ENCODE measurements at regions of chr2 and their contacts with region 1.

Region 1: DNA sequence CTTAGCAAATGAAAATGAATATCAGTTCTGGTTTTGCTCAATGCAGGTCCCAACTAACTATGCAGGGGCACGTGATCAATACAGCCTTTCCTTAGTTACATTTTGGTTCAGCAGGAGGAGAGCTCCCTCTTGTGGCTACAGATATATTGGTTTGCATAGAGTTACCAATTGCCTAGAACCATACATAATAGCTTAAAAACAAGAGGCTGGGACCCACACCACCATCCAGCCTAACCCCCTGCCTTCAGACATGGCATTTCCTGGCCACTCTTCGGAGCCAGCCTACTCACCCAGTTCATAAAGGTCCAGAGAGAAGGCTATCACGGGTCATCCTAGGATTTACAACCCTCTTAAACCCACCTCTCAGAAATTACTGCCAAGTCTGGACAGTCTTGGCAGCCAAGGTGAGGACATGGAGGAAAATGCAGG is 10.5 kb downstream of the CCDC93 start:
- DNase-seq: peak; percentile 80
- H3K4me3 Mint-ChIP-seq: no peak overlapping the region
- H3K27ac Mint-ChIP-seq: no peak overlapping the region
- H3K4me1 Mint-ChIP-seq: peaks cover 4% of the 10 kb centered on the region
- H3K27me3 Mint-ChIP-seq: no peaks in the 10 kb centered on the region
- CTCF ChIP-seq: peak; percentile 68

Region 2: GRCh38 chr2:117820444-117820843 is 183.0 kb before region 1 on chr2:
- CTCF ChIA-PET with region 1: interaction called, 82 read pairs
- POLR2A ChIA-PET with region 1: no interaction called
- intact Hi-C with region 1: no loop called
- DNase-seq: no peak
- H3K4me3 Mint-ChIP-seq: no peak overlapping the region
- H3K27ac Mint-ChIP-seq: no peak overlapping the region
- H3K4me1 Mint-ChIP-seq: no peaks in the 10 kb centered on the region
- H3K27me3 Mint-ChIP-seq: no peaks in the 10 kb centered on the region
- CTCF ChIP-seq: no peak

Region 3: GRCh38 chr2:117949806-117950205 is 53.6 kb before region 1 on chr2:
- CTCF ChIA-PET with region 1: interaction called, 26 read pairs
- POLR2A ChIA-PET with region 1: no interaction called
- intact Hi-C with region 1: no loop called
- DNase-seq: no peak
- H3K4me3 Mint-ChIP-seq: no peak overlapping the region
- H3K27ac Mint-ChIP-seq: no peak overlapping the region
- H3K4me1 Mint-ChIP-seq: no peaks in the 10 kb centered on the region
- H3K27me3 Mint-ChIP-seq: no peaks in the 10 kb centered on the region
- CTCF ChIP-seq: no peak

Region 4: DNA sequence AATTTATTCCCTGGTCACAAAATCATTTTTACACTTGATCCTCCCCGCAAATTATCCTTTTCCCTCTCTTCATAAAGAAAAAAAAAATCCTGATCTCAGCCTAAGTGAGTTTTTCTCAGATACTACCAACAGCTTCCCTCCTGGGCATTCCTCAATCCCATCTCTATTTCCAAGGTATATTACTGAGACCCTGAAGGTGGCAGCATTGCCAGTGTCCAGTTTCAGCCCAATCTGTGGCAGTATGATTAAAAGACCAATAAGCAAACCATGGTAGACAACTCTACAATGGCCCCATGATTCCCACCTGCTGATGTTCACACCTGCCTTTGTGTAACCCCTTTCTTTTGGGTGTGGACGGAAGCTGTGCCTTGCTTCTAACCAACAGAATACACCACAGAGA is 34.7 kb before region 1 on chr2:
- CTCF ChIA-PET with region 1: interaction called, 18 read pairs
- POLR2A ChIA-PET with region 1: no interaction called
- intact Hi-C with region 1: no loop called
- DNase-seq: no peak
- H3K4me3 Mint-ChIP-seq: no peak overlapping the region
- H3K27ac Mint-ChIP-seq: no peak overlapping the region
- H3K4me1 Mint-ChIP-seq: no peaks in the 10 kb centered on the region
- H3K27me3 Mint-ChIP-seq: no peaks in the 10 kb centered on the region
- CTCF ChIP-seq: no peak

Region 5: GRCh38 chr2:118032169-118033013 is 29.0 kb after region 1 on chr2:
- CTCF ChIA-PET with region 1: interaction called, 17 read pairs
- POLR2A ChIA-PET with region 1: no interaction called
- intact Hi-C with region 1: no loop called
- DNase-seq: peak; percentile 60
- H3K4me3 Mint-ChIP-seq: no peak overlapping the region
- H3K27ac Mint-ChIP-seq: no peak overlapping the region
- H3K4me1 Mint-ChIP-seq: no peaks in the 10 kb centered on the region
- H3K27me3 Mint-ChIP-seq: peaks cover 70% of the 10 kb centered on the region
- CTCF ChIP-seq: peak; percentile 46